HAP-1 (cell line): ENCODE measurements at regions of chr12 and their contacts with region 1.

Region 1: DNA sequence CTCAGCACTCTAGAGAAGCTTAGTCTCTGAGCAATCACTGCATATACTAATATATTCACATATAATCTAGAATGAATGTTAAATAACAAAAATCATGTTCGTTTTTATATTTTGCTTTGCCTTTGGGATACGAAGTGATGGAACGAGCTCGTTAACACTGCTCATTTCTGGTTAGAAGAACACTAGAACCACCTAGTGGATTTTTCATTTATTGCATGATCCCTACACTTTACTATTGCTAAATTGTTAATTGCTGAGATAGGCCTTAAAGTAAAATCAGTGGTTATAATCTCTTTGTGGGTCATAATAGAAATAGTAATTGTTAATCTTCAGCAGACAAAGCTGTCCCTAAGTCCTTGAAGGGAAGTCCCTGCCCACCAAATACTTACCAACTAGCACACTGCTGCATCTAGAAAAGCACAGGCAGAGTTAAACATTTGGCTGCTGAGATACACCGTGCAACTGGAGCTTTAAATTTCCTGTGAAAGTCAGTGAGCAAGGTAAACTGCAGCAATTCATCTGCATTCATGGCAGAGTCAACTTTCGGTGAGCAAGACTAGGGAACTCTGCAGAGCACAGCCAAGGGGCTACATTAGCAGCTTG is 353.7 kb downstream of the APAF1 start:
- DNase-seq: peak in 1 of 2 experiments; percentile 62
- H3K4me3 ChIP-seq: no peak overlapping the region
- H3K4me1 ChIP-seq: no peaks in the 10 kb centered on the region
- H3K27me3 ChIP-seq: peaks cover 3% of the 10 kb centered on the region; the same call in 1 of the 2 replicates

Region 2: GRCh38 chr12:98725476-98726247 is 273.1 kb before region 1 on chr12:
- in situ Hi-C with region 1: loop called (anchors 25 kb)
- DNase-seq: peak; percentile 14 to 71
- H3K4me3 ChIP-seq: no peak overlapping the region
- H3K4me1 ChIP-seq: no peaks in the 10 kb centered on the region
- H3K27me3 ChIP-seq: no peaks in the 10 kb centered on the region